Left colon (tissue), 2 donors: ENCODE measurements at regions of chr4 and their contacts with region 1.

Region 1: DNA sequence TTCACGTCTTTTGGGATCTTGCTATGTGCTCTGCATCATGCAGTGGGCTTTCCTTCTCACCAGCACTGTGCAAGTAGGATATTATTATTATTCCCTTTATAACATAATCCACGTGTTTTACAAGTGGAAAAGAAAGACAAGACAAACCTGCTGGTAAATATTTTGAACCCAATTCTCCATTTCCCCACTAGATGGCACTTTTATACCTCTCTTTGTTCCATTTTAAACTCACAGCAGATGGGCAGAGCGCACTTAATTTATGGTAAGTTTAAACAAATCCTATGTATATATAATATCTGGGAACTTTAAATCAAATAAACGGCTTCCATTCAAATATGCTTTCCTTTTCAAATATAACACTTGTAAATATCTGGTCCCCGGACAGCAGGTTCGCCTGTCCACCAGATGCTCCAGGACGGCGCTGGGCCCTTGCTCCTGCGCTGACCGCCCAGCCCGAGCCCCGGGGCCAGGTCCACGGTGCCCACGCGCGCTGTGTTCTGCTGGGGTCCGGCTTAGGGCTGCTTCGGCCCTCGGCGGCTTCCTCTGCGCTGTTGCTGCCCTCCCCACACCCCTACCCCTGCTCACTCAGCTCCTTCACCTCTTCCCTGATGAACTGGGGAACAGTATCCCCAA is 31.1 kb downstream of the F11 start:
- DNase-seq: no peak
- ATAC-seq: peak; percentile 50

Region 2: DNA sequence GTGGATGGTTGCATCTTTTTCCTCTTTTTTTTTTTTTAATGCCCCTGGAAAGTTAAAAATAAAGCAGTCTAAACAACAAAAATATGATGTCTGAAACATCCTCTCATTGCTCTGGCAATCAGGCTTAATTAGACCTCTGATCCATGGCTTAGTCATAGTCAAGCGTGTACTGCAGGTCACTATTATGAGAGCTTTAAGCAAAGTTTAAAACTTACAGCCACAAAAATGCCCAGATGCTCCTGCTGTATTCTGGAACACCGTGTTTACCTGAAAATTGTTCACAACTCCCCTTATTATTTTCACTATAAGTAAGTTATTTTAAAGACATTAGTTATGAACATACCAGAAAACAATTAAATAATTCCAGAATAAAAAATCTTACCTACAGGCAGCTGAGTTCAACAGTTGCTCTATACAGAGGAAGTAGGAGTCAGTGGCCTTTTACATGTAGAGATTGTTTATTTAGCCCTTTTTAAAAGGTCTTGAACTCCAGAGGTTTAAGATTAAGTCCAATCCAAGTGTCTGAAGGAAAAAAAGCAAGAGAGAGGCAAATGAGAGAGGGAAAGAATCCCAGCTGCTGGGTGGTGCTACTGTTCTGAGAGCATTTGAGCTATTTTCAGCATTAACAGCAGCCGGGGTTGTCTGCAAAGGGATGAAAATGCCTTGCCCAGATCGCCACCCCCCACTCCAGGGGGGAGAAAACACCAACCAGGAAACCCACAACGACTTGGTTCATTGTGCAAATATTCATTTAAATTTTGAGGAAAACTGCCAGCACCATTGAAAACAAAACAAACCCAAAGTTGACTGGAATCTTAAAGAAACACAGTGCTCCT is 522.1 kb before region 1 on chr4:
- intact Hi-C with region 1: no loop called
- DNase-seq: peak in 1 of 2 donors; percentile 10
- ATAC-seq: peak; percentile 56

Region 3: GRCh38 chr4:186587416-186588018 is 290.4 kb after region 1 on chr4:
- intact Hi-C with region 1: loop called (anchors 2 to 10 kb)
- DNase-seq: peak in 1 of 2 donors; percentile 87
- ATAC-seq: peak; percentile 70

Region 4: DNA sequence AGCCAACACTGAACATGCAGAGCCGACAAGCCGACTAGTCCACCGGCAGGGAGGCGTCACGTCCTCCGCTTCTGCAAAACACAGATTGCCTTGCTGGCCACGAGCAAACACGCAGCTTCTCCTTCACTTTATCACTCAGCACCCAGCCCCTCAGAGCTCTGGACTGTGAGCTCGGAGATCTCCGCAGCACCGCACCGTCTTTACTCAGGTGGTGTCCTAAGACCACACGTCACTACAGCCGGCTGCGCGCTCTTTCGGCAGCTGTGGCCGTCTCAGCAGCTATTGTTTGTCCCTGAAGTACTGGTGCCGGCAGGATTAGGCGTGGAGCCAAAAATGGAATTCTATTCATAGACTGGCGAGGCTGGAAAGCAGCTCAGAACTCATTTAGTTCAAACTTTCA is 354.5 kb after region 1 on chr4:
- intact Hi-C with region 1: no loop called
- DNase-seq: no peak
- ATAC-seq: peak; percentile 30